ENCODE measurements at regions of chrX and their contacts with region 1.

Region 1: GRCh38 chrX:70096052-70096451 is 33.8 kb downstream of the OTUD6A start:
- DNase-seq: peak; percentile 14
- H3K4me3 ChIP-seq: no peak overlapping the region
- H3K27ac ChIP-seq: no peak overlapping the region
- H3K4me1 ChIP-seq: no peaks in the 10 kb centered on the region
- H3K27me3 ChIP-seq: no peaks in the 10 kb centered on the region
- CTCF ChIP-seq: peak; percentile 21 to 49

Region 2: GRCh38 chrX:68511255-68511654 is 1584.8 kb before region 1 on chrX:
- CTCF ChIA-PET with region 1: no interaction called
- dilution Hi-C with region 1: no loop called
- in situ Hi-C with region 1: no loop called
- intact Hi-C with region 1: loop called (anchors 5 kb)
- DNase-seq: peak; percentile 32
- H3K4me3 ChIP-seq: no peak overlapping the region
- H3K27ac ChIP-seq: no peak overlapping the region
- H3K4me1 ChIP-seq: no peaks in the 10 kb centered on the region
- H3K27me3 ChIP-seq: no peaks in the 10 kb centered on the region
- CTCF ChIP-seq: peak; percentile 85 to 86

Region 3: GRCh38 chrX:69424161-69424560 is 671.9 kb before region 1 on chrX:
- CTCF ChIA-PET with region 1: no interaction called
- dilution Hi-C with region 1: no loop called
- in situ Hi-C with region 1: no loop called
- intact Hi-C with region 1: loop called (anchors 5 kb)
- DNase-seq: no peak
- H3K4me3 ChIP-seq: no peak overlapping the region
- H3K27ac ChIP-seq: no peak overlapping the region
- H3K4me1 ChIP-seq: no peaks in the 10 kb centered on the region
- H3K27me3 ChIP-seq: peaks cover 3% of the 10 kb centered on the region
- CTCF ChIP-seq: peak; percentile 43 to 48

Region 4: GRCh38 chrX:69538321-69538876 is 557.7 kb before region 1 on chrX:
- CTCF ChIA-PET with region 1: no interaction called
- dilution Hi-C with region 1: no loop called
- in situ Hi-C with region 1: loop called (anchors 10 to 25 kb)
- intact Hi-C with region 1: loop called (anchors 5 kb)
- DNase-seq: peak; percentile 14
- H3K4me3 ChIP-seq: peak overlapping the region; percentile 28 to 54 (median 43)
- H3K27ac ChIP-seq: no peak overlapping the region
- H3K4me1 ChIP-seq: peaks cover 3% of the 10 kb centered on the region
- H3K27me3 ChIP-seq: no peaks in the 10 kb centered on the region
- CTCF ChIP-seq: peak; percentile 54 to 76

Region 5: GRCh38 chrX:69615779-69616456 is 480.1 kb before region 1 on chrX and contains the start of gene EDA:
- CTCF ChIA-PET with region 1: no interaction called
- dilution Hi-C with region 1: no loop called
- in situ Hi-C with region 1: no loop called
- intact Hi-C with region 1: loop called (anchors 5 kb)
- DNase-seq: peak; percentile 64
- H3K4me3 ChIP-seq: peak within 1 kb of the TSS; percentile 50 to 61 (median 57)
- H3K27ac ChIP-seq: no peak within 1 kb of the TSS
- H3K4me1 ChIP-seq: no peaks in the 10 kb centered on the region
- H3K27me3 ChIP-seq: peaks cover 4% of the 10 kb centered on the region
- CTCF ChIP-seq: no peak
- total RNA-seq, gene EDA: 0.17 to 1.4 TPM

Region 6: DNA sequence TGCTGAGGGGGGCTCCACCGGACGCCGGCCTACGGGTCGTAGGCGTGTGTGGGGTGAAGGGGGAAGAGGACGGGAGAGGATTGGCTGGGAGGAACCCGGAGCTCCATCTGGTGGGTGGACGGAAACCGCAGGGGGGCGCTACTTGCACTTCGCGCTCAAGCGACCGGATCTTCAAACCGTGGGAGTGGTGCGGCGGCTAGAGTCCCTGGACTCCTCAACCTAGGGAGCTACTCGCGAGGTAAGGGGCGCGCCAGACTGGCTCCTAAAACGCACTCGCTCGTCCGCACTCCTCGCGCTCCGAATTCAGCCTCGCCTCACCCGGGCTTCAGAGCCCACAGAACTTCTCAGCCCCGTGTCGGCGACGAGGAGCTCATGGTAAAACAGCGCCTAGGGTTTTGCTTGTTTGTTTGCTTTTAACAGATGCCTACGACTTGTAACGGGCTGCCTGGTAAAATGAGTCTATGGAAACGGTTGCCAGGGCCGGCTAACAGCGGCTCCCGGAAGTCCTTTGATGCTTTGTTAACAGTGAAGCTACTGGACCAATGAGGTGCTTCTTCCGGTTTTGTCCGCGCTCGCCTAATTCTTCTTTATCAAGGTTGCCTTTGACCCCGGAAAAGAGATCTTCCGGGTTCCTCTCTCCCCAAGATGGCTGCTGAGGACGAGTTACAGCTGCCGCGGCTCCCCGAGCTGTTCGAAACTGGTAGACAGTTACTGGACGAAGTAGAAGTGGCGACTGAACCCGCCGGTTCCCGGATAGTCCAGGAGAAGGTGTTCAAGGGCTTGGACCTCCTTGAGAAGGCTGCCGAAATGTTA is 37.5 kb after region 1 on chrX and contains the start of gene IGBP1:
- CTCF ChIA-PET with region 1: interaction called, 5 read pairs
- dilution Hi-C with region 1: no loop called
- in situ Hi-C with region 1: no loop called
- intact Hi-C with region 1: loop called (anchors 5 kb)
- DNase-seq: peak; percentile 79
- H3K4me3 ChIP-seq: peak within 1 kb of the TSS; percentile 59 to 82 (median 68)
- H3K27ac ChIP-seq: peak within 1 kb of the TSS; percentile 89
- H3K4me1 ChIP-seq: peaks cover 18% of the 10 kb centered on the region
- H3K27me3 ChIP-seq: no peaks in the 10 kb centered on the region
- CTCF ChIP-seq: peak; percentile 49 to 62
- total RNA-seq, gene IGBP1: 31.1 to 67.3 TPM

Region 7: DNA sequence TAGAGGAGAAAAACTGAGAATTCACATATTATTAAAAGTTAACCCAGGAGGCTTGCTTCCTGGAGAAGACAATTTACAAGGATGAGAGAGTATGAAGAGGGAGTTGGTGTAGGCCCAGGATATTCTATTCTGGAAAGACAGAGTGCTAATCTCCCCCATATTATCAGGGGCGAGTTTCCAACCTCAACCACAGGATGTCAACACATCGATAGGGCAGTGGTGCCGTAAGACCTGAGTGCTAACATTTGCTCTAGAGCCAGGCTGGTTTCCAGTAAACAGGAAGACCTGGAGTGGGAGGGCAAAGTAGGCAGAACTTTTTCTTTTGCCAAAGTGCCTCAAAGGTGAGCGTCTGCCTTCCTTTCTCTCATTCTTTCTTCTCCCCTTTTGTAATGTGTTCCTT is 135.6 kb after region 1 on chrX:
- CTCF ChIA-PET with region 1: no interaction called
- dilution Hi-C with region 1: no loop called
- in situ Hi-C with region 1: no loop called
- intact Hi-C with region 1: no loop called
- DNase-seq: no peak
- H3K4me3 ChIP-seq: no peak overlapping the region
- H3K27ac ChIP-seq: no peak overlapping the region
- H3K4me1 ChIP-seq: no peaks in the 10 kb centered on the region
- H3K27me3 ChIP-seq: no peaks in the 10 kb centered on the region
- CTCF ChIP-seq: no peak